ENCODE measurements at regions of chr11 and their contacts with region 1.

Region 1: DNA sequence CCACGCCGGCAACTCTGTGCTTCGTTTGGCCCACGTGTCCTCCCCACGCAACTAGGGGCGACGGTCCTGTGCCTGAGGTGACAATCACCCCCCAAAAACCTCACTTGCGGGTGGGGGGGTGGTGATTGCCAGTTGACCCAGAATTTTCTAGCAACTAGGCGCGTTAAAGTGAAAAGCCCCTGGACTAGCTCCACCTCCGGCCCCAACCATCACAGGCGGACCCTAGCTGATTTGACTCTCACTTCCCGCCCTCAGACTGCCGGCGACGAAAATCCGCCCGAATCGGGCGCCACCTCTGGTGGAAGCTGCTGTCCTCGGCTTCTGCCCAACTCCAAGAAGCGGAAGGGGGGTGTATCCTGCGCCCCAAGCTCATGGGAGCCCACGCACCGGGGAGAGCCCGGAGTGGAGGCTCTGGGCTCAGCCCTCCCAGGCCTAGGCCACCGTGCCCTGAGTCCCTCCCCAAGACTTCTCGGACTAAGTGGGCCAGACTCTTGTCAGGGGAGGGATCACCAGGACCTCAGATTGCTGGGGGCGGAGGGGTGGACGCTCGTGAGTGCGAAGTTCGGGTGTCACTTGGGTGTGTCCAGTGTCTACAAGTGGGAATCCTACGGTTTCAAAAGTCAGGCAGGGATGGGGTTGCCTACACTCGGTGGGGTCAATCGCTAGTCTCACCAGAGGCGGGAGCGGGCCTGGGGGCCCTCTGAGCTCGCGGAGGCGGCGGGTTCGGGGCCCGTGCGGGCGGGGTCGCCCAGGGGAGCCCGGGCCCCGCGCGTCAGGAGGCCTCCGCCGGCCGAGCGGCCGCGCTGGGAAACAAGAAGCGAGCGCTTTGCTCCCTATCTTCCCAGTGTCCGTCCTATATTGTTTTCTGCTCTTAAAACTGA is 12.3 kb downstream of the PAX6 start:
- DNase-seq: peak; percentile 86
- ATAC-seq: peak; percentile 79
- H3K4me3 Mint-ChIP-seq: peak overlapping the region; percentile 60
- H3K27ac Mint-ChIP-seq: no peak overlapping the region
- H3K4me1 Mint-ChIP-seq: peaks cover 50% of the 10 kb centered on the region
- H3K27me3 Mint-ChIP-seq: peaks cover 100% of the 10 kb centered on the region
- CTCF ChIP-seq: no peak

Region 2: GRCh38 chr11:31641477-31642062 is 157.2 kb before region 1 on chr11:
- CTCF ChIA-PET with region 1: interaction called, 44 read pairs
- POLR2A ChIA-PET with region 1: no interaction called
- DNase-seq: peak; percentile 65
- ATAC-seq: 0 out of 2 replicates have a peak, but pooled peaks have one; percentile 38
- H3K4me3 Mint-ChIP-seq: no peak overlapping the region
- H3K27ac Mint-ChIP-seq: no peak overlapping the region
- H3K4me1 Mint-ChIP-seq: no peaks in the 10 kb centered on the region
- H3K27me3 Mint-ChIP-seq: no peaks in the 10 kb centered on the region
- CTCF ChIP-seq: peak; percentile 59

Region 3: DNA sequence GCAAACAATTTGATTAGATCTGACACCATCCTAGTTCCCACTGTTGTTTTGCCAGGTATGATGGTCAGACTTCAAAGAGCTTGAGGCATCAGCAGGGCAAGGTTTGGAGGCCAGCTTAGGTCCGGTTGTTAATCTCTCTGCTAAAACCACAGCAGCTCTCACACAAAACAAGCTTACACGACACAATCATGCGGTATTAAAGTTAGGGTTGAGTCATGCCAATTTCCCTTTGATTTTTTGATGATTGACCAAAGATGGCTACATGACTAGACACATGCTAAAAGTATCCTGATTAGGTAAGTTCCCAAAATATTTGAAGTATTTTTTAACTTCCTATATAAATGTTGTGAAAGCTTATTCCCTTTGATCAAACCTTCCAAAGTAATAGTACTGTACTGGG is 143.3 kb before region 1 on chr11:
- CTCF ChIA-PET with region 1: no interaction called
- POLR2A ChIA-PET with region 1: no interaction called
- DNase-seq: no peak
- ATAC-seq: no peak
- H3K4me3 Mint-ChIP-seq: no peak overlapping the region
- H3K27ac Mint-ChIP-seq: no peak overlapping the region
- H3K4me1 Mint-ChIP-seq: peaks cover 7% of the 10 kb centered on the region
- H3K27me3 Mint-ChIP-seq: no peaks in the 10 kb centered on the region
- CTCF ChIP-seq: no peak

Region 4: GRCh38 chr11:31810779-31811647 is 12.2 kb after region 1 on chr11 and contains the start of gene PAX6:
- CTCF ChIA-PET with region 1: interaction called, 54 read pairs
- POLR2A ChIA-PET with region 1: interaction called, 3 read pairs
- DNase-seq: peak; percentile 75
- ATAC-seq: peak; percentile 34
- H3K4me3 Mint-ChIP-seq: peak within 1 kb of the TSS; percentile 78
- H3K27ac Mint-ChIP-seq: no peak within 1 kb of the TSS
- H3K4me1 Mint-ChIP-seq: peaks cover 69% of the 10 kb centered on the region
- H3K27me3 Mint-ChIP-seq: peaks cover 100% of the 10 kb centered on the region
- CTCF ChIP-seq: no peak
- total RNA-seq, gene PAX6: 0.18 to 3.3 TPM (median 0.30 TPM) in 3 replicates

Region 5: DNA sequence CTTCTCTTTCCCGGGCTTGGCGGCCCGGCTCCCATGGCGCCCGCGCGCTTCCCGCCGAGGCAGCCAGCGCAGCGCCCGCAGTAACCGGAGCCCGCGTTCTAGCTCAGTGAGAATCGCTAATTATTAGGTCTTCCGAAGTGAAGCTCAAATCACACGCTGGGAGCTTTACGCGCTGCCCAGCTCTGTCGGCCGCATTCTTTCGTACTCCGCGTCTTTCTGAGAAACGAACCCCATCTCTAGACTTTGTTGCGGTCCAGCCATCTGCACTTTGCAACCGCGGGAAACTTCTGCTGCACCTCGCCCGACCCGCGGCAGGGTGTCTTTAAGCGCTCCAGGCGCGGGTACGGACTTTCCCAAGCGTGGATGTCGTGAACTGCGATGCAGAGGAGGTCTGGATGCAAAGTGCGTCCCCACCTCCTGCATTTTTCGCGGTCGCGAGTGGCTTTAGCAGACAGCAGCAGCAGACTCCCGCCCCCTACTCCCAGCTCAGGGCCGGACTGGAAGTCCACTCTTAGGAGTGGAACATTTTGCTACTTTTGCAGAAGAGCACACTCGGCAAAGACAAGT is 18.3 kb after region 1 on chr11:
- CTCF ChIA-PET with region 1: interaction called, 54 read pairs
- POLR2A ChIA-PET with region 1: interaction called, 4 read pairs
- DNase-seq: peak; percentile 19
- ATAC-seq: no peak
- H3K4me3 Mint-ChIP-seq: peak overlapping the region; percentile 62
- H3K27ac Mint-ChIP-seq: no peak overlapping the region
- H3K4me1 Mint-ChIP-seq: peaks cover 64% of the 10 kb centered on the region
- H3K27me3 Mint-ChIP-seq: peaks cover 100% of the 10 kb centered on the region
- CTCF ChIP-seq: no peak

Region 6: GRCh38 chr11:31824879-31825837 is 26.4 kb after region 1 on chr11:
- CTCF ChIA-PET with region 1: interaction called, 54 read pairs
- POLR2A ChIA-PET with region 1: interaction called, 3 read pairs
- DNase-seq: no peak
- ATAC-seq: no peak
- H3K4me3 Mint-ChIP-seq: peak overlapping the region; percentile 70
- H3K27ac Mint-ChIP-seq: no peak overlapping the region
- H3K4me1 Mint-ChIP-seq: peaks cover 73% of the 10 kb centered on the region
- H3K27me3 Mint-ChIP-seq: peaks cover 99% of the 10 kb centered on the region
- CTCF ChIP-seq: no peak

Region 7: DNA sequence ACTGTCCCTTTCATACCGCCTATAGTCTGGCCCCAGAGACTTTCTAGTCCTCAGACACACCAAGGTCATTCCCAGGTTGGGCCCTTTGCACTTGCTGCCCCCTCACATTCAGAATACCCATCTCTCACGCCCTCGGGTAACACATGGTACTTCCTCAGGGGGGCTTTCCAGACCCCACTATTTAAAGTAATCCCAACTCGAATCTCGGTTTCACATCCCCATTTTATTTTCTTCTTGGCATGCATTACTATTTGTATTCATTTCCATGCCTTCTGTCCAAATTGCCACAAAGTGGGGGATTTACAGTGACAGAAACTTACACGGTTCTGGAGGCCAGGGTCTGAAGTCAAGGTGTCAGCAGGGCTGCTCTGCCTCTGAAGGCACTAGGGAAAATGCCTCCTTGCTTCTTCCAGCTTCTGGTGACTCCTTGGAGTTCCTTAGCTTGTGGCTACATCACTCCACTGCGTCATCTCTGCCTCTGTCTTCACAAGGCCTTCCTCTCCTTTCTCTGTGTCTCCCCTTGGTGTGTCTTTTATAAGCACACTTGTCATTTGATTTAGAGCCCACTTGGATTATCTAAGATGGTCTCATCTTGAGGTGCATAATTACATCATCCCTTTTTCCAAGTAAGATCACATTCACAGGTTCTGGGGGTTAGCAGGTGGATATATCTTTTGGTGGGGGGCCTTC is 307.2 kb after region 1 on chr11:
- CTCF ChIA-PET with region 1: no interaction called
- POLR2A ChIA-PET with region 1: no interaction called
- DNase-seq: no peak
- ATAC-seq: no peak
- H3K4me3 Mint-ChIP-seq: no peak overlapping the region
- H3K27ac Mint-ChIP-seq: no peak overlapping the region
- H3K4me1 Mint-ChIP-seq: peaks cover 3% of the 10 kb centered on the region; the same call in 1 of the 2 replicates
- H3K27me3 Mint-ChIP-seq: no peaks in the 10 kb centered on the region
- CTCF ChIP-seq: no peak